GM12878 (cell line): ENCODE measurements at regions of chr5 and their contacts with region 1.

Region 1: DNA sequence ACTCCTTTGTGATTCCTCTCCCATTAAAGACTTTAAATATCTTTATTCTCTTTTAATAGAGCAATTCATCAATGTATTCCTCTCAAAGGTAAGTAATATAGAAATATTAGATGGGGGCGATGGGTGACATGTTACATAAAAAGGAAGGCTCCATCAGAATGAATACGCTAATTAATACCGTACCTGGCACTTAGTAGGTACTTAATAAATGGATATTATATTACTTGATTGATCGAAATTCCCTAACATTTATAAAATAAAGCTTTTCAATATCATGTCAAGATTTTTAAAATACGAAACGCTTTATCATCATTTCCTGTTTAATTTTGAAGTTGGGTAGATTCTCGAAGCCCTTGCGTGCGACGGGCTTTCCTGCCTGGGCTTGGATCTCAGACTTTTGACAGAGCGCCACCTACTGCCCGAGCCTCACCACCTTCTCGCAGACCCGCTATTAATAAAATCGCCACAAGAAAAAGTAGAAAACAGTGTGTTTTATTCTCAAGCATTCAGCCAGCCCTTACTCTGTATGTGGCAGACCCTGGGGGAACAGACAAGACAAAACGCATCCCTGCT is 99.4 kb downstream of the C5orf15 start:
- DNase-seq: no peak
- ATAC-seq: peak; percentile 85
- H3K4me3 ChIP-seq: no peak overlapping the region
- H3K27ac ChIP-seq: no peak overlapping the region
- H3K4me1 ChIP-seq: no peaks in the 10 kb centered on the region
- H3K27me3 ChIP-seq: no peaks in the 10 kb centered on the region
- CTCF ChIP-seq: peak; percentile 77 to 88 (median 82)
- EP300 ChIP-seq: no peak
- POLR2A ChIP-seq: no peak
- RAD21 ChIP-seq: peak; percentile 81

Region 2: GRCh38 chr5:133552931-133553525 is 316.0 kb before region 1 on chr5:
- CTCF ChIA-PET with region 1: interaction called, 27 read pairs
- POLR2A ChIA-PET with region 1: no interaction called
- RAD21 ChIA-PET with region 1: interaction called, 12 read pairs
- SMC1A ChIA-PET with region 1: interaction called, 15 read pairs
- in situ Hi-C with region 1: no loop called
- intact Hi-C with region 1: loop called (anchors 1 kb)
- DNase-seq: no peak
- ATAC-seq: peak; percentile 98
- H3K4me3 ChIP-seq: no peak overlapping the region
- H3K27ac ChIP-seq: no peak overlapping the region
- H3K4me1 ChIP-seq: no peaks in the 10 kb centered on the region
- H3K27me3 ChIP-seq: no peaks in the 10 kb centered on the region; a peak in 3 of 4 replicates
- CTCF ChIP-seq: peak; percentile 76 to 83 (median 82)
- EP300 ChIP-seq: no peak
- POLR2A ChIP-seq: no peak
- RAD21 ChIP-seq: peak; percentile 56

Region 3: GRCh38 chr5:133779828-133780475 is 89.1 kb before region 1 on chr5:
- CTCF ChIA-PET with region 1: interaction called, 65 read pairs
- POLR2A ChIA-PET with region 1: no interaction called
- RAD21 ChIA-PET with region 1: interaction called, 9 read pairs
- SMC1A ChIA-PET with region 1: interaction called, 11 read pairs
- in situ Hi-C with region 1: no loop called
- intact Hi-C with region 1: loop called (anchors 2 kb)
- DNase-seq: no peak
- ATAC-seq: peak; percentile 75
- H3K4me3 ChIP-seq: no peak overlapping the region
- H3K27ac ChIP-seq: no peak overlapping the region
- H3K4me1 ChIP-seq: no peaks in the 10 kb centered on the region
- H3K27me3 ChIP-seq: no peaks in the 10 kb centered on the region
- CTCF ChIP-seq: peak; percentile 17 to 34 (median 34); a peak in 4 of 6 replicates
- EP300 ChIP-seq: no peak
- POLR2A ChIP-seq: no peak
- RAD21 ChIP-seq: peak; percentile 45

Region 4: DNA sequence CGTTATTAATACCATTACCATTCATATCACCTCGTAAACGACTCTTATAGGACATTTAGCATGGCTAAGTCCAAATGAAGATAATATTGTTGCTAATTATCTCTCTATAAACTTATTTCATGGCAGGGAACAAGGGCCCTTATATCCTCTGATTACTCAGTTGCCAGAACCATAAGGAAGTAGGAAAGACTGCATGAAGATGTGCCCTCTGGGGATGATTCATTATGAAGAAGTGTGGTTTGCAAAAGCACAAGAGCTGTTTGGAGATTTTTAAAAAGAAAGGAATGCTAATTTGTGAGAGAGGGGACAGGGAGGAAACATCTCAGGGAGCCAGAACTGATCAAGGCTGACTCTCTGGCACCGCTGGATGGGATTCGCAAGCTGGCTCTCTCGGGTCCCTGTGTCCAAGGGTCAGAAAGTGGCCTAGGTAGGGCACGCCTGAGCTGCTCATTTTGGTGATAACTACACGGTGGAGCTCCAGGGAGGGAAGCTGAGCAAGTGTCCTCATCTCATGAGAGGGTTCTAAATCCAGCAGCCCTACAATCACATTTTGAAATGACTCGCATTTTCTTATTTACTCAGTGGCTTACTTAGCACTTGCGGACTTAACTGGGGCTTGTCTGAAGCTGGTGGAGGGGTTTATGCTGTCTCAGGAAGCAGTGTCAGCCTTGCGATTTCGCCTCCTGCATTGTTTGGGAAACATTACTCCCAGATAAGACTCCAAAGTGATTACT is 37.4 kb before region 1 on chr5:
- CTCF ChIA-PET with region 1: interaction called, 77 read pairs
- POLR2A ChIA-PET with region 1: interaction called, 3 read pairs
- RAD21 ChIA-PET with region 1: interaction called, 4 read pairs
- SMC1A ChIA-PET with region 1: interaction called, 13 read pairs
- in situ Hi-C with region 1: no loop called
- intact Hi-C with region 1: no loop called
- DNase-seq: no peak
- ATAC-seq: peak; percentile 43
- H3K4me3 ChIP-seq: no peak overlapping the region; the same call in 1 of the 2 replicates
- H3K27ac ChIP-seq: no peak overlapping the region
- H3K4me1 ChIP-seq: peaks cover 6% of the 10 kb centered on the region; the same call in 1 of the 2 replicates
- H3K27me3 ChIP-seq: no peaks in the 10 kb centered on the region
- CTCF ChIP-seq: no peak
- EP300 ChIP-seq: no peak
- POLR2A ChIP-seq: no peak
- RAD21 ChIP-seq: no peak

Region 5: GRCh38 chr5:133938929-133939328 is 69.9 kb after region 1 on chr5:
- CTCF ChIA-PET with region 1: interaction called, 41 read pairs
- POLR2A ChIA-PET with region 1: no interaction called
- RAD21 ChIA-PET with region 1: interaction called, 8 read pairs
- SMC1A ChIA-PET with region 1: interaction called, 10 read pairs
- in situ Hi-C with region 1: no loop called
- intact Hi-C with region 1: no loop called
- DNase-seq: no peak
- ATAC-seq: peak; percentile 76
- H3K4me3 ChIP-seq: no peak overlapping the region
- H3K27ac ChIP-seq: peak overlapping the region; percentile 70
- H3K4me1 ChIP-seq: peaks cover 41% of the 10 kb centered on the region
- H3K27me3 ChIP-seq: no peaks in the 10 kb centered on the region
- CTCF ChIP-seq: no peak
- EP300 ChIP-seq: no peak
- POLR2A ChIP-seq: no peak
- RAD21 ChIP-seq: 0 out of 2 replicates have a peak, but pooled peaks have one; percentile 2